PC-9 (cell line): ENCODE measurements at regions of chr6 and their contacts with region 1.

Region 1: GRCh38 chr6:56902641-56903464 is 52.1 kb upstream of the BEND6 start:
- DNase-seq: no peak
- H3K4me3 ChIP-seq: no peak overlapping the region
- H3K27ac ChIP-seq: no peak overlapping the region
- H3K4me1 ChIP-seq: peaks cover 19% of the 10 kb centered on the region
- H3K27me3 ChIP-seq: no peaks in the 10 kb centered on the region
- CTCF ChIP-seq: peak; percentile 85

Region 2: DNA sequence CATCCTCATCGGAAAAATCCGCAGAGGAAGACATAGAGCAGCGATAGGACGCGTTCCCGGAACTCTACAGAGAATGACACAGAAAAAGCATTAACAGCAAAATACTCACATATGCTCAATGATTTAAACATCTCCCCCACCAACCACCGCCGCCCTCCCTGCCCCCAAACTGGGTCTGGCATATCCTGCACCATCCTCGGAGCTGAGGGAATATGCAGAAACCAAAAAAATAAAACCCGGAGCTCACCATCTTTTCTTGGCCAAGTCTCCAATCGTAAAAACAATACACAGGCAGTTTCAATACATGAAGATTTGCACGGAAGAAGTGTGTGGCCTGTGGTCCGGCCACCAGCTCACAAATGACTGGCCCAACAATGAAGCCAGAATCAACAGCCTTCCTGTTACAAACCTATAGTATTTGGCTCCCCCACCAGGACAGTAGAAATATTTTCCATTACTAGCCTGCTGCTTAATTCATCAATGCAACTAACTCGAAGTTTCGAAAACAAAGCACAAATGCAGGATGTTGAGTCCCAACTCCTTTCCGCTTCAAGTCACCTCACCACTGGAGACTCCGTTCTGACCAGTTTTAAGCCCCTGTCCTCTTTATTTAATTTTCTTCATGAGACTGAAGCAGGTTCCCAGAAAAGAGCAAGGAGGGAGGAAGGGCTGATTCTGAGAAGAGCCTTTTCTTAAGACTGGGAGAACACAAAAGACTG is 51.2 kb before region 1 on chr6:
- CTCF ChIA-PET with region 1: no interaction called
- POLR2A ChIA-PET with region 1: no interaction called
- intact Hi-C with region 1: loop called (anchors 5 kb)
- DNase-seq: peak; percentile 28 to 73
- H3K4me3 ChIP-seq: peak overlapping the region; percentile 75
- H3K27ac ChIP-seq: peak overlapping the region; percentile 88
- H3K4me1 ChIP-seq: peaks cover 43% of the 10 kb centered on the region
- H3K27me3 ChIP-seq: no peaks in the 10 kb centered on the region
- CTCF ChIP-seq: peak; percentile 76

Region 3: GRCh38 chr6:56890683-56891429 is 12.0 kb before region 1 on chr6:
- CTCF ChIA-PET with region 1: interaction called, 12 read pairs
- POLR2A ChIA-PET with region 1: no interaction called
- intact Hi-C with region 1: no loop called
- DNase-seq: peak in 1 of 2 experiments; percentile 61
- H3K4me3 ChIP-seq: no peak overlapping the region
- H3K27ac ChIP-seq: peak overlapping the region; percentile 92
- H3K4me1 ChIP-seq: peaks cover 24% of the 10 kb centered on the region
- H3K27me3 ChIP-seq: no peaks in the 10 kb centered on the region
- CTCF ChIP-seq: no peak

Region 4: GRCh38 chr6:56970849-56971248 is 68.0 kb after region 1 on chr6:
- CTCF ChIA-PET with region 1: no interaction called
- POLR2A ChIA-PET with region 1: no interaction called
- intact Hi-C with region 1: no loop called
- DNase-seq: no peak
- H3K4me3 ChIP-seq: no peak overlapping the region
- H3K27ac ChIP-seq: no peak overlapping the region
- H3K4me1 ChIP-seq: no peaks in the 10 kb centered on the region
- H3K27me3 ChIP-seq: no peaks in the 10 kb centered on the region
- CTCF ChIP-seq: no peak

Region 5: GRCh38 chr6:57021086-57021720 is 118.3 kb after region 1 on chr6:
- CTCF ChIA-PET with region 1: interaction called, 5 read pairs
- POLR2A ChIA-PET with region 1: no interaction called
- intact Hi-C with region 1: loop called (anchors 5 kb)
- DNase-seq: peak in 1 of 2 experiments; percentile 64
- H3K4me3 ChIP-seq: no peak overlapping the region
- H3K27ac ChIP-seq: no peak overlapping the region
- H3K4me1 ChIP-seq: no peaks in the 10 kb centered on the region
- H3K27me3 ChIP-seq: no peaks in the 10 kb centered on the region
- CTCF ChIP-seq: peak; percentile 72

Region 6: DNA sequence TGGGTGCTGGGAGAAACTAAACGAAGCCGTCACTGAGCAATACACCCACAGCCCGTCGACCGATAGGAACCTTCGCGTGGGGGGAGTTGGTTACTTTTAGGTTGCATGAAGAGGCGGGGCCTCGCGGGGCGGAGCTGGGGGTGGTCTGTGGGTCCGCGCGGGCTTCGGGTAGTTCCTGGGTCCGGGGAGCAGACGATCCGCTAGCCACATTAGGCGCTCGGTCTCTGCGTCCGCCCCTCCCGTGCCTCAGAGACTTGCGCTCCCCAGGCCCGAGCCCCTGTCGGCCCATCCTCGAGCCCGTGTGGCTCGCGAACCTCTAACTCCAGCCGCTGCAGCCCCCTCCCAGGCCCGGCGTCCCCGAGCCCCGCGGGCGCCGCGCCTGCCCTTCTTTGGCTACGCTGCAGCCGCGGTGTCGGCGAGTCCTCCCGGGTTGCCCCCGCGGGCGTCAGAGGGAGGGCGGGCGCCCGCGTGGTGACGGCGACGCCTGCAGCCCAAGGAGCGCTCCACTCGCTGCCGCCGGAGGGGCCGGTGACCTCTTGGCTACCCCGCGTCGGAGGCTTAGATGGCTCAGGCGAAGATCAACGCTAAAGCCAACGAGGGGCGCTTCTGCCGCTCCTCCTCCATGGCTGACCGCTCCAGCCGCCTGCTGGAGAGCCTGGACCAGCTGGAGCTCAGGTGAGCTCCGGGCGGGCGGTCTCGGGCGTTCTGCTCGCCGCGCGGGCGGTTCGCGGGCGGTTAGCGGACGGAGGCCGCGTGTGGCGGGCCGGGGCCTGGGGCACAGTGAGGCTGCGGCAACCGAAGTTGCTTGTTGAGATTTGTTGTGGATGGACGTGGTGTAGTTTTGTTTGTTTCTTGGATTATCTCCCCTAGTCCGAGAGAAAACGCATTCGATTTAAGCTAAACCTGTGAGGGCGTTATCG is 269.5 kb after region 1 on chr6 and contains the start of gene BAG2:
- CTCF ChIA-PET with region 1: interaction called, 5 read pairs
- POLR2A ChIA-PET with region 1: no interaction called
- intact Hi-C with region 1: loop called (anchors 10 kb)
- DNase-seq: peak; percentile 73 to 85
- H3K4me3 ChIP-seq: peak within 1 kb of the TSS; percentile 91
- H3K27ac ChIP-seq: peak within 1 kb of the TSS; percentile 87
- H3K4me1 ChIP-seq: peaks cover 30% of the 10 kb centered on the region
- H3K27me3 ChIP-seq: no peaks in the 10 kb centered on the region
- CTCF ChIP-seq: no peak; the same call in 1 of the 2 replicates
- total RNA-seq, gene BAG2: 9.0 and 11.0 TPM in 2 replicates